ENCODE measurements at regions of chr2 and their contacts with region 1.

Region 1: GRCh38 chr2:149561309-149561926 is 26.2 kb downstream of the MMADHC start:
- DNase-seq: no peak
- ATAC-seq: no peak
- H3K4me3 ChIP-seq: no peak overlapping the region
- H3K27ac ChIP-seq: no peak overlapping the region
- H3K4me1 ChIP-seq: peaks cover 0 to 13% (median 0%) of the 10 kb centered on the region in 12 donors
- H3K27me3 ChIP-seq: no peaks in the 10 kb centered on the region
- CTCF ChIP-seq: peak; percentile 85 to 94 (median 88)
- POLR2A ChIP-seq: no peak

Region 2: GRCh38 chr2:149017116-149017985 is 544.1 kb before region 1 on chr2:
- intact Hi-C with region 1: loop called (anchors 1 to 5 kb)
- DNase-seq: peak in 4 of 5 donors; percentile 65 to 71 (median 70)
- ATAC-seq: peak in 3 of 4 donors; percentile 58 to 71 (median 65)
- H3K4me3 ChIP-seq: no peak overlapping the region
- H3K27ac ChIP-seq: no peak overlapping the region
- H3K4me1 ChIP-seq: peaks cover 0 to 6% (median 0%) of the 10 kb centered on the region in 12 donors
- H3K27me3 ChIP-seq: peaks cover 0 to 5% (median 0%) of the 10 kb centered on the region in 9 donors
- CTCF ChIP-seq: peak; percentile 75 to 91 (median 86)
- POLR2A ChIP-seq: no peak

Region 3: DNA sequence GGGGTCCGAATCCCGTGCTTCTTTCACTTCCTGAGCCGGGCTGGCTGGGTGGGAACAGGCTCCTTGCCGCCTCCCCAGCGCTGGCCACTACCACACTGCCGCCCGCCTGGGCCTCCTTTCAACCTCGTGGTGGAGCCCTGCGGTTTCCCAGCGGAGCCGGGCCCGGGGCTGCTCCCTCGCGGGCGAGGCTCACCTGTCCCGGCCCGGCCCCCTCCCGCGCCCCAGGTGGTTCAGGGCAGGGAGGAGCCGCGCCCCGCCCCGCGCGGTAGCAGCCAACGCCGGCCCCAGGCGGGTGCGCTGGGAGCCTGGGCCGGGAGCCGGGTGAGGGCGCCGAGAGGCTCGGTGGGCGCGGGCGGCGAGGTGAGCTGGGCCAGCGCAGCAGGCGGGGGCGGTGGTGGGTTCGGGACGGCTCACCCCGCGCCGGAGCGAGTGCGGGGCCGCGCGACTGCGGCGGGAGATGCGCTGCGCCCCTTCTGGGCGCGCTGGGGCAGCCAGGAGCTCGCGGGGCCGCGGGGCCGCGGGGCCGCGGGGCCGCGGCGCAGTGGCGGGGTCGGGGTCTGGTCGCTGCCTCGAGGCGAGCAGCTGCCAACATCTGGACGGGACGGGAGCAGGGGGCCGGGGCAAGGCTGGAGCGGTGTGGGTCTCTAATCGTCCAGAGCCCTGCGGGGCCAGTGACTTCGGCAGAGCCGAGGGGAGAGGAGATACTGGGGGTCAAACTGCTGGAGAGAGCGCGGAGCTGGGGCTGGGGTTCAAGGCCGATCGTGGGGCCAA is 522.8 kb before region 1 on chr2 and contains the start of gene LYPD6B:
- intact Hi-C with region 1: loop called in 1 of 10 experiments (anchors 5 kb)
- DNase-seq: no peak
- ATAC-seq: peak in 2 of 4 donors; percentile 22 to 29
- H3K4me3 ChIP-seq: peak within 1 kb of the TSS in 5 of 12 donors; percentile 20 to 44 (median 21)
- H3K27ac ChIP-seq: no peak within 1 kb of the TSS
- H3K4me1 ChIP-seq: peaks cover 0 to 10% (median 0%) of the 10 kb centered on the region in 12 donors
- H3K27me3 ChIP-seq: peaks cover 10 to 47% (median 31%) of the 10 kb centered on the region in 9 donors
- CTCF ChIP-seq: no peak
- POLR2A ChIP-seq: no peak
- total RNA-seq, gene LYPD6B: not detected

Region 4: DNA sequence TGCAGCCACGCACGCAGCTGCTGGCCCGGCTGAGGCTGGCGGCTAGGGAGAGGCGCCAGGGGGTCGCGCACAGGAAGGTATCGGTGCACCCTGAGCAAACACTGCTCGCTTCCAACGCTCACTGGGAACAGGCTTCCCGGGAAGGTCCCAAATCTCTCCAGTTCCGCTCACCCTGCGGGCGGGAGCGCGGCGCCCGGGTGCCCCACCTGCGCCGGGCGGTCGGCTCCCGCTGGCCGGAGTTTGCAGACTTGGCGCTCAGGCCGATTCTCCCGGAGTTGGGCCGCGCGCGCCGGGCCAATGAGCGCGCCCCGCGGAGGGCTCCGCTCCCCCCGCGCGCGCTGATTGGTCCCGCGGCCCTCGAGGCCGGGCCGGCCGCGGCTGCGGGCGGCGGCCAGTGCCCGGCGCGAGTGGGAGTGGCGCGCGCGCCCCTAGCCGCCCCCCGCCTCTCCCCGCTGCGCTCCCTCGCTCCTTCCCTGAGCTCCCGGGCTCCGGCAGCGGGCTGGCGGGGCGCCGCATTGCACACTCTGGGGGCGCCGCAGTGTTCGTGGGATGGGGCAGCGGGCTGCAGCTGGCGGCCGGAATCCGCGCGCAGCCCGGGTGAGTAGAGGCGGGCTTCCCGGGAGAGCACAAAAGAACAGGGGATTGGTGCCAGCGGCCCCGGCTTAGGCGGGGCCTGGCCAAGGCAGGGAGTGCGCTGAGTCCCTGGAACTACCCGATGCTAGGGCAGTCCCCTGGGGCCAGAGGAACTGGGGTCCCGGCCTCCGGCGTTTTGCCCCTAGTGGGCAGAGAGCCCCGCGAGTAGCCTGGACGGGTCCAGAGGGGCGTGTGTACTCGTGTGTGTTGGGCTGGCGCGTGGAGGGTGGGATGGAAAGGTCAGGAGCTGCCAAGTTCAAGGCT is 231.0 kb before region 1 on chr2 and contains the start of gene LYPD6:
- intact Hi-C with region 1: loop called in 1 of 10 experiments (anchors 10 kb)
- DNase-seq: peak; percentile 57 to 83 (median 69)
- ATAC-seq: peak; percentile 93 to 100 (median 97)
- H3K4me3 ChIP-seq: peak within 1 kb of the TSS; percentile 35 to 75 (median 59)
- H3K27ac ChIP-seq: peak within 1 kb of the TSS in 1 of 12 donors; percentile 44
- H3K4me1 ChIP-seq: peaks cover 0 to 19% (median 8%) of the 10 kb centered on the region in 12 donors
- H3K27me3 ChIP-seq: peaks cover 0 to 65% (median 17%) of the 10 kb centered on the region in 9 donors
- CTCF ChIP-seq: no peak
- POLR2A ChIP-seq: no peak
- total RNA-seq, gene LYPD6: 0.05 to 0.72 (median 0.17) TPM in 8 of 9 donors, not detected in the other

Measured in heart left ventricle (tissue), 16 donors.